ENCODE measurements at regions of chr2 and their contacts with region 1.

Region 1: GRCh38 chr2:216371756-216372702 is at the start of gene MARCHF4:
- DNase-seq: peak; percentile 74
- ATAC-seq: peak; percentile 59
- H3K4me3 ChIP-seq: peak within 1 kb of the TSS; percentile 67
- H3K27ac ChIP-seq: peak within 1 kb of the TSS; percentile 85
- H3K4me1 ChIP-seq: peaks cover 25% of the 10 kb centered on the region
- H3K27me3 ChIP-seq: no peaks in the 10 kb centered on the region
- CTCF ChIP-seq: no peak
- total RNA-seq, gene MARCHF4: 1.9 and 3.7 TPM in 2 replicates

Region 2: GRCh38 chr2:216242365-216242764 is 129.7 kb before region 1 on chr2:
- CTCF ChIA-PET with region 1: no interaction called
- POLR2A ChIA-PET with region 1: no interaction called
- intact Hi-C with region 1: loop called (anchors 10 kb)
- DNase-seq: no peak
- ATAC-seq: no peak
- H3K4me3 ChIP-seq: no peak overlapping the region
- H3K27ac ChIP-seq: no peak overlapping the region
- H3K4me1 ChIP-seq: no peaks in the 10 kb centered on the region
- H3K27me3 ChIP-seq: no peaks in the 10 kb centered on the region
- CTCF ChIP-seq: no peak

Region 3: GRCh38 chr2:216315789-216316603 is 56.0 kb before region 1 on chr2:
- CTCF ChIA-PET with region 1: no interaction called
- POLR2A ChIA-PET with region 1: no interaction called
- intact Hi-C with region 1: loop called (anchors 5 kb)
- DNase-seq: peak; percentile 81
- ATAC-seq: peak; percentile 89
- H3K4me3 ChIP-seq: peak overlapping the region; percentile 58
- H3K27ac ChIP-seq: peak overlapping the region; percentile 91
- H3K4me1 ChIP-seq: peaks cover 25% of the 10 kb centered on the region
- H3K27me3 ChIP-seq: no peaks in the 10 kb centered on the region
- CTCF ChIP-seq: no peak